ENCODE measurements at regions of chr4 and their contacts with region 1.

Region 1: GRCh38 chr4:68375667-68376559 is 26.0 kb upstream of the YTHDC1 start:
- DNase-seq: peak in 13 of 14 experiments; percentile 3 to 82 (median 41)
- ATAC-seq: peak; percentile 85
- H3K4me3 ChIP-seq: peak overlapping the region; percentile 30
- H3K4me3 Mint-ChIP-seq: peak overlapping the region; percentile 76
- H3K27ac ChIP-seq: no peak overlapping the region
- H3K27ac Mint-ChIP-seq: no peak overlapping the region
- H3K4me1 ChIP-seq: peaks cover 7% of the 10 kb centered on the region
- H3K4me1 Mint-ChIP-seq: peaks cover 13% of the 10 kb centered on the region
- H3K27me3 ChIP-seq: no peaks in the 10 kb centered on the region
- H3K27me3 Mint-ChIP-seq: peaks cover 17% of the 10 kb centered on the region
- CTCF ChIP-seq: peak; percentile 84

Region 2: DNA sequence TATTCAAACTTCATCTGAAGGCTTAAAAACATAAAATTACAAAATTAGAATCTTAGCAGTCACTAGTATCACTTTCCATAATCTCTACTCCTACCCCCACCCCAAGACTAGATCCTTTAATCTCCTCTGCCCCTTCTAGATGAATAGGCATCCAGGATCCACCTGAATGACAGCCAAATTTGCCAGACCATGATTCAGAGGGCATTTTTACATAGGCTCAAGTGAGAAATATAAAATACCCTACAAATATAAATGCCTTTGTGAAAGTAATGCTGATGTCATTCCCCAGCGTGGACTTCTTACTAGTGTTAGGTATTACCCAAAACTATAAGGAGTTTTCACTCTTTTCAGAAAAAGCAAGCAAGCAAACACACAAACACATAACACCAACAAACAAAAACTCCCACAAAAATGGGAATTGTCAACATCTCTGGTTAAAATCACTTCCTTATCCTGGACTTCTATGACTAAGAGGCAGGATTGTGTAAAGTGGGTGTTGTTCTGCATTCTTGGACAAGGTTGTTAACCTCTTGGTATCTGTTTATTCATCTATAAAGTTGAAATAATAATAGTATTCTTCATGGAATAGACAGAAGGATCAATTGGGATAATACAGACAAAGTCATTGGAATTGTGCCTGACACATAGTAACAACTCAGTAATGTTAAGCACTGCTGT is 194.9 kb before region 1 on chr4:
- CTCF ChIA-PET with region 1: no interaction called
- POLR2A ChIA-PET with region 1: no interaction called
- intact Hi-C with region 1: loop called in 1 of 2 experiments (anchors 5 kb)
- DNase-seq: no peak
- ATAC-seq: no peak
- H3K4me3 ChIP-seq: no peak overlapping the region
- H3K4me3 Mint-ChIP-seq: no peak overlapping the region
- H3K27ac ChIP-seq: no peak overlapping the region
- H3K27ac Mint-ChIP-seq: no peak overlapping the region
- H3K4me1 ChIP-seq: no peaks in the 10 kb centered on the region
- H3K4me1 Mint-ChIP-seq: no peaks in the 10 kb centered on the region
- H3K27me3 ChIP-seq: no peaks in the 10 kb centered on the region
- H3K27me3 Mint-ChIP-seq: peaks cover 7% of the 10 kb centered on the region
- CTCF ChIP-seq: no peak

Region 3: GRCh38 chr4:68324519-68325262 is 51.2 kb before region 1 on chr4:
- CTCF ChIA-PET with region 1: no interaction called
- POLR2A ChIA-PET with region 1: no interaction called
- intact Hi-C with region 1: loop called in 1 of 2 experiments (anchors 5 kb)
- DNase-seq: no peak
- ATAC-seq: no peak
- H3K4me3 ChIP-seq: no peak overlapping the region
- H3K4me3 Mint-ChIP-seq: no peak overlapping the region
- H3K27ac ChIP-seq: no peak overlapping the region
- H3K27ac Mint-ChIP-seq: peak overlapping the region; percentile 21
- H3K4me1 ChIP-seq: no peaks in the 10 kb centered on the region
- H3K4me1 Mint-ChIP-seq: peaks cover 5% of the 10 kb centered on the region
- H3K27me3 ChIP-seq: no peaks in the 10 kb centered on the region
- H3K27me3 Mint-ChIP-seq: no peaks in the 10 kb centered on the region
- CTCF ChIP-seq: no peak

Region 4: GRCh38 chr4:68349649-68350360 is 26.1 kb before region 1 on chr4 and contains the start of gene YTHDC1:
- CTCF ChIA-PET with region 1: interaction called, 6 read pairs
- POLR2A ChIA-PET with region 1: interaction called, 4 read pairs
- intact Hi-C with region 1: loop called (anchors 1 to 2 kb)
- DNase-seq: peak; percentile 89 to 99 (median 95)
- ATAC-seq: peak; percentile 94
- H3K4me3 ChIP-seq: peak within 1 kb of the TSS; percentile 87
- H3K4me3 Mint-ChIP-seq: peak within 1 kb of the TSS; percentile 99
- H3K27ac ChIP-seq: peak within 1 kb of the TSS; percentile 86 to 98
- H3K27ac Mint-ChIP-seq: peak within 1 kb of the TSS; percentile 100
- H3K4me1 ChIP-seq: peaks cover 18% of the 10 kb centered on the region
- H3K4me1 Mint-ChIP-seq: peaks cover 49% of the 10 kb centered on the region
- H3K27me3 ChIP-seq: no peaks in the 10 kb centered on the region
- H3K27me3 Mint-ChIP-seq: no peaks in the 10 kb centered on the region
- CTCF ChIP-seq: no peak
- total RNA-seq, gene YTHDC1: 383 to 389 TPM

Measured in CD4-positive, alpha-beta T cell (primary cell).